H1 (cell line): ENCODE measurements at regions of chr11 and their contacts with region 1.

Region 1: DNA sequence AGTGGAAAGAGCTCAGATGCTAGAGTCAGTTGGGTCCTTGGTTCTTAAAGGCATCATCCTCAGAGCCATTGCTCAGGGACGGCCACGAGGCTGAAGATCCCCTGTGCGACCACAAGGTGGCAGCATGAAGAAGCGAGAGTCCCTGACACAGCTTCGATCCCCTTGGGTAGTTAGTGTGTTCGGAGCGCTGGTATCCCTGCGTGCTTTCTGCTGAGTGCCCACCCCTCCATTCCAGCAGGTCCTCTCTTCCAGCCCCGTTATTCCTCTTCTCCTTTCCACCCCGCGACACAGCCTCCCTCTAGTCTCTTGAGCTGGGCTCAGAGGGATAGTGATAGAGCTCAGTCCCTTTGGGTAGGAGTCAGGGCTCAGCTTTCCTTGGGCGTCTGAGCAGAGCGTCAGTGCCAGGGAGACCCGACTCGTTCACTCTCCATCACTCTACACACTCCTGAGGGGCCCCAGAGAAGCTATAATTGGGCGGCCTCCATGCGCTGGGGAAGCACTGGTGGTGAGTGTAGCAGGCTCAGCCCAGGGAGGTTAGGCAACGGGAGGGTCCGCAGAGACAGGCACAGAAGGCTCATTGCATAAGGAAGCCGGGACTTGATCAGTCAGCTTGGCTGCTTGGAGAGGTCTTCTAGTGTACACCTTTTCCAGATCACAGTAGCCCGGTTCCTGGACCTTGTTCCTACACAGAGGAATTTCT is at the start of gene OR51D1:
- DNase-seq: peak; percentile 33 to 86
- H3K4me3 ChIP-seq: 0 out of 8 replicates have a peak within 1 kb of the TSS, but pooled peaks of 1 of the 4 experiments have one; percentile 24
- H3K27ac ChIP-seq: no peak within 1 kb of the TSS
- H3K4me1 ChIP-seq: no peaks in the 10 kb centered on the region
- H3K27me3 ChIP-seq: peaks cover 0 to 7% (median 4%) of the 10 kb centered on the region in 4 experiments; a peak in 5 of 7 replicates
- CTCF ChIP-seq: peak; percentile 88 to 99 (median 92)
- EP300 ChIP-seq: no peak
- POLR2A ChIP-seq: no peak
- RAD21 ChIP-seq: peak; percentile 95
- total RNA-seq, gene OR51D1: not detected in 2 replicates

Region 2: GRCh38 chr11:4181782-4182721 is 455.1 kb before region 1 on chr11:
- CTCF ChIA-PET with region 1: interaction called, 11 read pairs
- POLR2A ChIA-PET with region 1: no interaction called
- DNase-seq: peak; percentile 51 to 75
- H3K4me3 ChIP-seq: no peak overlapping the region
- H3K27ac ChIP-seq: no peak overlapping the region
- H3K4me1 ChIP-seq: no peaks in the 10 kb centered on the region
- H3K27me3 ChIP-seq: no peaks in the 10 kb centered on the region
- CTCF ChIP-seq: peak; percentile 78 to 88 (median 86)
- EP300 ChIP-seq: no peak
- POLR2A ChIP-seq: no peak
- RAD21 ChIP-seq: peak; percentile 91 to 94

Region 3: DNA sequence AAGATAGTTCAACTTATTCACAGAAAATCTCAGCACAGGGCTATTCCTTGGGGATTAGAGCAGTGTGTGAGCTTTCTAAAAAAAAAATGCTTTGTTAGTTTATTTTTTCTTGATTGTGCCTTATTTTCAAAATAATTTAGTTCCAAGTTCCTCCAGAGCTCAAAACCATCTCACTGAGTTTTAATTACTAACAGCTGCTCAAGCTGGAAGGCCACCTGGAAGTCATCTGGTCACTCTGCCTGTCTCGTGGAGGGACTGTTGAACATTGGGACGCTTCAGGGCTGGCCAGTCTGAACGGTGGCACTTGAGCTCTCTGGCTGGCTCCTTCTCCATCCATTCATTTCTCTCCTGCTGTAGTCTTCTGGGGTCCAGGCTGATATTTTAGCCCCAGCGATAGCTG is 10.7 kb after region 1 on chr11:
- CTCF ChIA-PET with region 1: interaction called, 30 read pairs
- POLR2A ChIA-PET with region 1: no interaction called
- DNase-seq: no peak
- H3K4me3 ChIP-seq: no peak overlapping the region
- H3K27ac ChIP-seq: no peak overlapping the region
- H3K4me1 ChIP-seq: no peaks in the 10 kb centered on the region
- H3K27me3 ChIP-seq: no peaks in the 10 kb centered on the region
- CTCF ChIP-seq: no peak
- EP300 ChIP-seq: no peak
- POLR2A ChIP-seq: no peak
- RAD21 ChIP-seq: no peak

Region 4: DNA sequence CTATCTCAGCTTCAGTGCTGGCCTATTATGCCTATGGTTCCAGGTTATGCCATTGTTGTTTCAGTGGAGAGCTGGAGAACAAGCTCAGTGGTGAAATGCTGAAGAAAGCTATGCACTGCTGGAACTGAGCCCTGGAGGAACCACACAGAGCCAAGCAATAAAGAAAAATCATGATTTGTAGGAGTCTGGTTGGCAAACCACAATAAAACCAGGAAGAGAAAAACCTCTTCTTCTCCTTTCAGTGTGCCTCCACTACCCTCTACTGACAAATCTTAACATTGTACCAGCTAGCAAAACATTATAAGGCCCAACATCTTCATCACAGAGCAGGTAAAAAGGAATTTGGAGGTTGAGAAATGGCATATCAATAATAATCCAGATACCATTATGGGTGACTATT is 189.3 kb after region 1 on chr11:
- CTCF ChIA-PET with region 1: interaction called, 83 read pairs
- POLR2A ChIA-PET with region 1: no interaction called
- DNase-seq: no peak
- H3K4me3 ChIP-seq: no peak overlapping the region
- H3K27ac ChIP-seq: no peak overlapping the region
- H3K4me1 ChIP-seq: peaks cover 0 to 2% (median 0%) of the 10 kb centered on the region in 4 experiments; a peak in 1 of 7 replicates
- H3K27me3 ChIP-seq: peaks cover 0 to 2% (median 0%) of the 10 kb centered on the region in 4 experiments; a peak in 1 of 7 replicates
- CTCF ChIP-seq: peak in 2 of 3 experiments; percentile 48 to 56; a peak in 2 of 4 replicates
- EP300 ChIP-seq: no peak
- POLR2A ChIP-seq: no peak
- RAD21 ChIP-seq: peak; percentile 79 to 86

Region 5: GRCh38 chr11:5004424-5005274 is 367.5 kb after region 1 on chr11:
- CTCF ChIA-PET with region 1: interaction called, 21 read pairs
- POLR2A ChIA-PET with region 1: no interaction called
- DNase-seq: peak; percentile 2 to 70
- H3K4me3 ChIP-seq: no peak overlapping the region
- H3K27ac ChIP-seq: no peak overlapping the region
- H3K4me1 ChIP-seq: no peaks in the 10 kb centered on the region
- H3K27me3 ChIP-seq: no peaks in the 10 kb centered on the region
- CTCF ChIP-seq: peak in 2 of 3 experiments; percentile 65 to 71; a peak in 3 of 4 replicates
- EP300 ChIP-seq: no peak
- POLR2A ChIP-seq: no peak
- RAD21 ChIP-seq: peak; percentile 83 to 84